ENCODE measurements at regions of chr17 and their contacts with region 1.

Region 1: DNA sequence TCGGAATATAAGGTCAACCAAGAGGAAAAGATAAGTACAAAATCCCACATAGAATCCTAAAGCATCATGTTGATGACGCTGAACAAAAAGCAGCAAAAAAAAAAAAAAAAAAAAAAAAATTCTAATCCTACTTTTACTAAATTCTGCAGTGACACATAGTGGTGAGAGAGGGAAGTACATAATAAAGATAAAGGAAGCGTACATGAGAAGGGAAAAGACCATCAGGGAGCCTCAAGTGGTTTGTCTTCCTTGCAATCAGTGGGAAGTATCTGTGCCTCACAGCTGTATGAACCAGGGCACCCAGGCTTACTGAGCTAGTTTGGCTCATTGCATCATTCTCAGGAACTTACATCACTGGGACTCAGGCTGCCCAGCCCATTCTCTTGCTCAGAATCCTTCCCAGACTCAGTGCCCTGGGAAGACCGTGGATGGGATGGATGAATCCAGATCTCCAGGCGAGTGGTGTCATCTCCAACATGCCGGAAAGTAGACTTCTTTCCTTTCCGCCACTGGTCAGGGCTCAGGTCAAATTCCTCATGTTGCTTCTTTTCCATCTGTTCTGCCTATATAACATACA is 21.2 kb downstream of the SMG6 start:
- DNase-seq: no peak
- ATAC-seq: peak; percentile 43
- H3K4me3 Mint-ChIP-seq: no peak overlapping the region
- H3K27ac Mint-ChIP-seq: no peak overlapping the region
- H3K4me1 Mint-ChIP-seq: no peaks in the 10 kb centered on the region
- H3K27me3 Mint-ChIP-seq: no peaks in the 10 kb centered on the region
- CTCF ChIP-seq: peak; percentile 39; the same call in 1 of the 2 replicates

Region 2: DNA sequence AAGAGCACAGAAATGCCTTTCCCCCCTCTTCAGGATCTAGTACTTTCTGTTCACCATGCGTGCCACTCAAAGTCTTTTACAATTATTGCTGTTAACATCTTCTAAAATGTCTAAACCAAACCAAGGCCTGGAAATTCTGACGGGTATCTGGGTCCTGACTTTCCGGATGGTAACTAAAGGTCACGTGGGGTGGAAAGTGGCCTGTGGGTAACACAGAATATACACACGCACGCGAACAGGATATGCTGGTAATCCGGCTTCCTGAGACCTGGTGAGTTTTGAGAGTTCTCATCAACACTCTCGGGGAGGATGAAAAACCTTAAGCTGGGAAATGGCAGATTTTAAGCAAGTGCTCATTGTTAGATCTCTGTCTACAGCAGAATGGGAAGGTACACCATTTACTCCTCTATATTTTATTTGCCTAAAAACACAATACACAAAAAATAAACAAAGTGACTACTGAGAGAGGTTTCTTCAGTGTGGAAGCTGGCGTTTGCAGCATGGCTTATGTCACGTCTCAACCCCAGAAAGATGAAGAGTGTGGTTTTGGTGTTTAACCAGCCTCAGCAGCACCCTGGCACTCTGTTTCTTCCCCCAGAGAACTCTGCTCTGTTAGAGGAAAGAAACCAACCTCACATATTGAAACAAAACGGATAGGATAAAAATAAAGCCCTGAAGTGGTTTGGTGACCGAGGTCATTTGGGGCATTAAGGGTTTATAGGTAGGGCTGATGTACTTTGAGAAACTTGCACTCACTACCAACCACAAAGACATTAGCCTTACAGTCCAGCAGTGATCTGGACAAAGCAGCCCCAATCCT is 16.1 kb before region 1 on chr17:
- CTCF ChIA-PET with region 1: interaction called, 11 read pairs
- POLR2A ChIA-PET with region 1: interaction called, 4 read pairs
- DNase-seq: no peak
- ATAC-seq: no peak
- H3K4me3 Mint-ChIP-seq: no peak overlapping the region
- H3K27ac Mint-ChIP-seq: peak overlapping the region; percentile 16; the same call in 1 of the 2 replicates
- H3K4me1 Mint-ChIP-seq: no peaks in the 10 kb centered on the region
- H3K27me3 Mint-ChIP-seq: no peaks in the 10 kb centered on the region
- CTCF ChIP-seq: no peak

Measured in WTC11 (cell line).